K562 (cell line): ENCODE measurements at regions of chr12 and their contacts with region 1.

Region 1: GRCh38 chr12:56117778-56118687 is at the start of gene ZC3H10:
- DNase-seq: peak; percentile 87 to 100 (median 90)
- ATAC-seq: peak; percentile 88
- H3K4me3 ChIP-seq: peak within 1 kb of the TSS; percentile 59
- H3K27ac ChIP-seq: peak within 1 kb of the TSS; percentile 97
- H3K4me1 ChIP-seq: peaks cover 16 to 17% of the 10 kb centered on the region in 2 experiments
- H3K27me3 ChIP-seq: no peaks in the 10 kb centered on the region
- CTCF ChIP-seq: peak; percentile 70 to 79 (median 71)
- EP300 ChIP-seq: peak; percentile 69
- POLR2A ChIP-seq: peak; percentile 99
- RAD21 ChIP-seq: peak; percentile 14 to 44; a peak in 3 of 4 replicates
- polyA plus RNA-seq, gene ZC3H10: 0.31 to 0.46 TPM

Region 2: DNA sequence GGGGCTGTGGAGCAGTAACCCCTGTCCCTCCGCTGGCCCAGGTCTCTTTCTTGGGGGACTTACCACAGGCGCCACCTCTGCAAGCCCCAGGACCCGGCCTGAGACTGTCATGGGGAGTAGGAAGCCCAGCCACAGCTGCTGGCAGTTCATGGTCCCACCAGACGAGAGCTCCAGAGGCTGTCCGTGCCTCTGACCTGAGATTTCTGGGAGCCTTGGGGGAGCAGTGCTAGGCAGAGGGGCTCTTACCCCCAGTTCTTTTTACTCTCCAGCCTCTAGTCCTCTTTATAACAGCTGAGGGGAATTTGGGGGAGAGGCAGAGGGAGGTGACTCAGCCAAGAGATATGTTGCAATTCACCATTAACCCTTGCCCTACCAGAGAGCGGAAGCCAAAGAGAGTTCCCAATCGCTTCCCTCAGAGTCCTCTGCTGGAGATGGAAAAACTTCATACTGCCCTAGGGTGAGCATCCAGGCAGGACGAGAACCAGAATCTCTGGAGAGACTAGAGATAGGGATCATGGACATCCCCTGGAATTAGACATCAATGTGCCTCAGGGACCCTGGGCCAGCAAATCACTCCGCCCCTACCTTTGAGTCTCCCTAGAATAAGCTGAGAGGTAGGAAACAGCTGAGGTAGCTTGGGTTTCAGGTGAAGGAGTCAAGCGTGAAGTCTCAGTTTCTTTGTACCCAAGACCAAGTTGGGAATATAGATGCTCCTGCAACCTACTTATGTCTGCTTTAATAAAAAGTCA is 275.2 kb before region 1 on chr12 and contains the start of gene MMP19:
- CTCF ChIA-PET with region 1: no interaction called
- POLR2A ChIA-PET with region 1: no interaction called
- in situ Hi-C with region 1: no loop called
- intact Hi-C with region 1: no loop called
- DNase-seq: peak; percentile 57 to 74 (median 66)
- ATAC-seq: peak; percentile 82
- H3K4me3 ChIP-seq: peak within 1 kb of the TSS; percentile 34
- H3K27ac ChIP-seq: peak within 1 kb of the TSS; percentile 31; the same call in 1 of the 3 replicates
- H3K4me1 ChIP-seq: peaks cover 15 to 23% of the 10 kb centered on the region in 2 experiments
- H3K27me3 ChIP-seq: no peaks in the 10 kb centered on the region
- CTCF ChIP-seq: 0 out of 6 replicates have a peak, but pooled peaks of 1 of the 3 experiments have one; percentile 0
- EP300 ChIP-seq: peak; percentile 45; the same call in 1 of the 2 replicates
- POLR2A ChIP-seq: no peak
- RAD21 ChIP-seq: no peak
- polyA plus RNA-seq, gene MMP19: 0.25 to 0.56 TPM

Region 3: GRCh38 chr12:55926738-55927587 is 191.1 kb before region 1 on chr12:
- CTCF ChIA-PET with region 1: no interaction called
- POLR2A ChIA-PET with region 1: no interaction called
- in situ Hi-C with region 1: no loop called
- intact Hi-C with region 1: no loop called
- DNase-seq: peak; percentile 96 to 98 (median 97)
- ATAC-seq: peak; percentile 81
- H3K4me3 ChIP-seq: peak overlapping the region; percentile 69
- H3K27ac ChIP-seq: peak overlapping the region; percentile 95
- H3K4me1 ChIP-seq: peaks cover 21 to 27% of the 10 kb centered on the region in 2 experiments; a peak in 4 of 5 replicates
- H3K27me3 ChIP-seq: no peaks in the 10 kb centered on the region
- CTCF ChIP-seq: peak; percentile 68 to 77 (median 68)
- EP300 ChIP-seq: no peak; the same call in 1 of the 2 replicates
- POLR2A ChIP-seq: no peak; the same call in 1 of the 2 replicates
- RAD21 ChIP-seq: peak in 1 of 2 experiments; percentile 30; a peak in 2 of 4 replicates

Region 4: GRCh38 chr12:56041552-56042429 is 76.2 kb before region 1 on chr12 and contains the start of gene RPS26:
- CTCF ChIA-PET with region 1: interaction called, 5 read pairs
- POLR2A ChIA-PET with region 1: interaction called, 17 read pairs
- in situ Hi-C with region 1: no loop called
- intact Hi-C with region 1: no loop called
- DNase-seq: peak; percentile 89 to 100 (median 92)
- ATAC-seq: peak; percentile 90
- H3K4me3 ChIP-seq: peak within 1 kb of the TSS; percentile 83
- H3K27ac ChIP-seq: peak within 1 kb of the TSS; percentile 98
- H3K4me1 ChIP-seq: peaks cover 13 to 25% of the 10 kb centered on the region in 2 experiments; a peak in 3 of 5 replicates
- H3K27me3 ChIP-seq: no peaks in the 10 kb centered on the region
- CTCF ChIP-seq: peak; percentile 42 to 82 (median 73)
- EP300 ChIP-seq: no peak
- POLR2A ChIP-seq: peak; percentile 100
- RAD21 ChIP-seq: peak; percentile 65 to 79
- polyA plus RNA-seq, gene RPS26: 1,319 to 1,589 TPM

Region 5: GRCh38 chr12:56104109-56104814 is 13.8 kb before region 1 on chr12 and contains the start of gene PA2G4:
- CTCF ChIA-PET with region 1: no interaction called
- POLR2A ChIA-PET with region 1: interaction called, 125 read pairs
- in situ Hi-C with region 1: no loop called
- intact Hi-C with region 1: no loop called
- DNase-seq: peak; percentile 90 to 99 (median 94)
- ATAC-seq: peak; percentile 97
- H3K4me3 ChIP-seq: peak within 1 kb of the TSS; percentile 97
- H3K27ac ChIP-seq: peak within 1 kb of the TSS; percentile 99
- H3K4me1 ChIP-seq: peaks cover 11 to 25% of the 10 kb centered on the region in 2 experiments; a peak in 4 of 5 replicates
- H3K27me3 ChIP-seq: no peaks in the 10 kb centered on the region
- CTCF ChIP-seq: no peak; a peak in 1 of 6 replicates
- EP300 ChIP-seq: no peak
- POLR2A ChIP-seq: peak; percentile 94
- RAD21 ChIP-seq: no peak
- polyA plus RNA-seq, gene PA2G4: 230 to 303 TPM

Region 6: GRCh38 chr12:56158029-56158925 is 40.2 kb after region 1 on chr12 and contains the start of gene MYL6:
- CTCF ChIA-PET with region 1: interaction called, 3 read pairs
- POLR2A ChIA-PET with region 1: interaction called, 51 read pairs
- in situ Hi-C with region 1: no loop called
- intact Hi-C with region 1: loop called (anchors 5 kb)
- DNase-seq: peak; percentile 89 to 99 (median 94)
- ATAC-seq: peak; percentile 81
- H3K4me3 ChIP-seq: peak within 1 kb of the TSS; percentile 90
- H3K27ac ChIP-seq: peak within 1 kb of the TSS; percentile 98
- H3K4me1 ChIP-seq: peaks cover 40 to 52% of the 10 kb centered on the region in 2 experiments; a peak in 4 of 5 replicates
- H3K27me3 ChIP-seq: no peaks in the 10 kb centered on the region
- CTCF ChIP-seq: no peak
- EP300 ChIP-seq: no peak; the same call in 1 of the 2 replicates
- POLR2A ChIP-seq: peak; percentile 99
- RAD21 ChIP-seq: peak in 1 of 2 experiments; percentile 17; a peak in 1 of 4 replicates
- polyA plus RNA-seq, gene MYL6: 1,377 to 1,664 TPM

Region 7: GRCh38 chr12:56258057-56258819 is 140.2 kb after region 1 on chr12 and contains the start of gene ANKRD52:
- CTCF ChIA-PET with region 1: interaction called, 6 read pairs
- POLR2A ChIA-PET with region 1: no interaction called
- in situ Hi-C with region 1: no loop called
- intact Hi-C with region 1: loop called (anchors 1 kb)
- DNase-seq: peak; percentile 87 to 94 (median 94)
- ATAC-seq: peak; percentile 97
- H3K4me3 ChIP-seq: peak within 1 kb of the TSS; percentile 91
- H3K27ac ChIP-seq: peak within 1 kb of the TSS; percentile 84
- H3K4me1 ChIP-seq: peaks cover 12 to 20% of the 10 kb centered on the region in 2 experiments; a peak in 4 of 5 replicates
- H3K27me3 ChIP-seq: no peaks in the 10 kb centered on the region
- CTCF ChIP-seq: peak; percentile 45 to 96 (median 69); a peak in 5 of 6 replicates
- EP300 ChIP-seq: no peak
- POLR2A ChIP-seq: peak; percentile 77
- RAD21 ChIP-seq: peak; percentile 51 to 53
- polyA plus RNA-seq, gene ANKRD52: 0.52 to 0.55 TPM

Region 8: GRCh38 chr12:56468216-56469006 is 350.4 kb after region 1 on chr12 and contains the start of gene SPRYD4:
- CTCF ChIA-PET with region 1: interaction called, 3 read pairs
- POLR2A ChIA-PET with region 1: interaction called, 3 read pairs
- in situ Hi-C with region 1: loop called (anchors 10 kb)
- intact Hi-C with region 1: loop called (anchors 1 kb)
- DNase-seq: peak; percentile 95 to 97 (median 96)
- ATAC-seq: peak; percentile 91
- H3K4me3 ChIP-seq: peak within 1 kb of the TSS; percentile 66
- H3K27ac ChIP-seq: peak within 1 kb of the TSS; percentile 91
- H3K4me1 ChIP-seq: peaks cover 9 to 10% of the 10 kb centered on the region in 2 experiments; a peak in 3 of 5 replicates
- H3K27me3 ChIP-seq: no peaks in the 10 kb centered on the region
- CTCF ChIP-seq: peak; percentile 45 to 52 (median 50)
- EP300 ChIP-seq: no peak
- POLR2A ChIP-seq: peak; percentile 92
- RAD21 ChIP-seq: peak in 1 of 2 experiments; percentile 11; a peak in 2 of 4 replicates
- polyA plus RNA-seq, gene SPRYD4: 3.8 to 4.7 TPM